Ascending aorta (tissue), 2 donors: ENCODE measurements at regions of chr11 and their contacts with region 1.

Region 1: GRCh38 chr11:67391304-67392132 is at the start of gene RAD9A:
- DNase-seq: peak; percentile 89 to 98
- H3K4me3 ChIP-seq: peak within 1 kb of the TSS; percentile 72 to 84
- H3K27ac ChIP-seq: peak within 1 kb of the TSS; percentile 59 to 62
- H3K4me1 ChIP-seq: peaks cover 7 to 15% of the 10 kb centered on the region in 2 donors
- H3K27me3 ChIP-seq: no peaks in the 10 kb centered on the region
- CTCF ChIP-seq: no peak
- total RNA-seq, gene RAD9A: 22.6 TPM

Region 2: DNA sequence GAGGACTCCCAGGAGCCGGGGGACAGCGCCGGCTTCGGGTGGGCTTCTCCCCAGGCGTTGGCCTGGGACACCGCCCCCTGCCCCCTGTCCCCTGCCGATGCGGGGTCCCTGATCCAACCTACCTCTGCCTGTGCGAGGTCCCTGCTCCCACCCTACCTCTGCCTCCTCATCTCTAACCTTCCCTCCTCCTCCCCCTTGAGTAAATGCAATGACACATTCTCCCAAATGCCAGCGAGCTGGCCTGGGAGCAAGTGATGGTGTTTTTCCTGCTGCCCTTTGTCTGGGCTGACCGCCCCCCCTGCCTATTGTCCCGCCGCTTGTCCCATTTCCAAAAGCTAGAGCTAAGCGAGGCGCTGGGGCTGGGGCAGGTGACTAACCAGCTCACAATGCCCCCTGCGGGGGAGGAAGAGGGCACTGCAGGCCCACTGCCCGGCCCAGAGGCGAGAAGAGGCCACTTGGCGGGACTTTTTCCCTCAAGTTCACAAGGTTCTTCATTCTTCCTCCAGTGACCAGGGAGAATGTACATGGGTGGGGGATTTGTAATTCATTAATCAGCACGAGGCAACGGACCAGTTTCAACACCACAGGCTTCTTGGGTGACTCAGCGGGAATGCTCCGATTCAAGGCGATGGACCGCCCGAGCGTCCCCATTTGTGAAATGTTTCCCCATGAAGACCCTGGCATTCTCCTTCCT is 17.4 kb before region 1 on chr11:
- intact Hi-C with region 1: loop called (anchors 1 kb)
- DNase-seq: peak; percentile 74 to 97
- H3K4me3 ChIP-seq: peak overlapping the region; percentile 97
- H3K27ac ChIP-seq: peak overlapping the region; percentile 97 to 98
- H3K4me1 ChIP-seq: peaks cover 0 to 34% of the 10 kb centered on the region in 2 donors
- H3K27me3 ChIP-seq: no peaks in the 10 kb centered on the region
- CTCF ChIP-seq: peak; percentile 30 to 61 (median 55)